Lower leg skin (tissue), 4 donors: ENCODE measurements at regions of chr1 and their contacts with region 1.

Region 1: DNA sequence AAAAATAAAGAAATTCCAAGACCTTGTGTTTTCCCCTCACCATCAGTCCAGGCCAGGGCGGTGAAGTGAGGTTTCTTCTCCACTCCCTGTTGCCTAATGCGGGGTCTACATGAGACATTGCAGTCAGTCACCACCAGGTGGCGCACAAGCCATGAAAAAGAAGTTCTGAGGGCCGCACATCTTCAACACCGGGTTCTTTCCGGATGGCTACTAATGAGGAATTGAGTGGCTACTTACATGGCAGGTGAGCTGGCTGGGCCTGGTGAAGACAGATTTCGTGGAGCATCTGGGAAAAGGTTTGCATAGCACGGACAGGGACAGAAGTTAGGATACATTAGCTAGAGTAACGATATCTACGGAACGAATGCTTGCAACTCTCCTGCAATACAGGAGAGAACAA is 15.8 kb upstream of the S100A11 start:
- DNase-seq: peak; percentile 89 to 97
- H3K4me3 ChIP-seq: no peak overlapping the region
- CTCF ChIP-seq: peak in 1 of 3 donors; percentile 86
- POLR2A ChIP-seq: no peak

Region 2: DNA sequence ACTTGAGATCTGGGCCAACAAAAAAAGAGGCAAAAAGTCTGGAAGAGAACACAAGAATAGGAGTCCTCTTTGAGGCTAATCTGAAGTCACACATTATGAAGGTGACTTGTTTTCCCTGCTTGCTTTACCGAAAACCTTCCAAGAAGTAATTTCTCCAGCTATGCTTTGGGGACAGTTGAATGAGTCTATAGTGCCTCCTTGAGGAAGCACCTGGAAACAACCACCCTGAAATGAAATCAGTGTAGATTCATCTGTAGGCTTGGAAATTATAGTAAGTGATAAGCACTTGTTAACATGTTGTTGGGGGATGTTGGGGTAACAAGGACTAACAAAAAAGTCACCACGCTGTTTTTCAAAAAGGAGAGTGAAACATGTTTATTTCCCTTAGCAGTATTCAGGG is 129.8 kb after region 1 on chr1:
- intact Hi-C with region 1: loop called (anchors 2 kb)
- DNase-seq: no peak
- H3K4me3 ChIP-seq: no peak overlapping the region
- CTCF ChIP-seq: no peak
- POLR2A ChIP-seq: no peak

Region 3: DNA sequence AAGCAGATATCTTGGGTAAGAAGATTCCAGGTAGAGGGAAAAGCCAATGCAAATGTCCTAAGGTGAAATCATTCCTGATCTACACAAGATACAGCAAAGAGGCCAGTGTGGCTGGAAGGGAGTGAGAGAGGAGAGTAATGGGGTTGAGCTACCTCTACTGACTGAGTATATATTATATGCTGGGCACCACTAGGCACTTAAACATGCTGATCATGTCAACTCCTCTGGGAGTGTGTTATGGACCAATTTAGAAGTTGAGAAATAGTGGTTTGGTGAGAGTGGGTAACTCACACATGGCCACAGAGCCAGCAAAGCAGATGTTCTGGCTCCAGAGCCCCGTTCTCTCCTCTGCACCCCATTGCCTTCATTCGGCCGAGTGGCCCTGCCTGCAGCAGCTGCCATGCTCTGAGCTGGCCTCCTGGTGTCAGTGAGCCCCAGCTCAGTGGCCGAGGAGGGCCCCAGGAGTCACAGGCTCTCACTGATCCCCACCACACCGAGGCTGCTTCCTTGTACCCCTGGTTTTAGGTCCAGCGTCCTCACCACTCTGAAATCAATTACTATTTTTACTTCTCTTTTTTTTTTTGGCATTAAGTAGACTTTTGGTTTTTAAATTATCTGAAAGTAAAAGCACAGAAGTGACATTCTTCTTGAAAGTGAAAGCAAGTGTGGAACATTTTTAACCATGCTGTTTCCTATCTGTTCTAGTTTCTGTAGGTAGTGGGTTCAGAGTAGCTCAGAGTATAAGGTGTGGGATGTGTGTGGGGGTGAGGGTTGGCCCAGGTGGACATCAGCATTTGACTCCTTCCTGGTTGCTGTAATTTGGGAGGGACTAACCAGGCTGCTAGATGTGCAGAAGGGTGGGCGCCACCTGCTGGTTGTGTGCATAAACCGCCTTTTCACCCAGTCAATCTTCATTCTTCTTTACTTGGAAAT is 407.3 kb after region 1 on chr1:
- intact Hi-C with region 1: loop called (anchors 5 kb)
- DNase-seq: peak in 1 of 2 donors; percentile 92
- H3K4me3 ChIP-seq: no peak overlapping the region
- CTCF ChIP-seq: peak in 1 of 3 donors; percentile 26
- POLR2A ChIP-seq: no peak